HCT116 (cell line): ENCODE measurements at regions of chr6 and their contacts with region 1.

Region 1: GRCh38 chr6:158769771-158770432 is 49.3 kb downstream of the EZR start:
- DNase-seq: no peak
- ATAC-seq: no peak
- H3K4me3 ChIP-seq: no peak overlapping the region
- H3K27ac ChIP-seq: peak overlapping the region; percentile 57
- H3K4me1 ChIP-seq: peaks cover 13 to 100% of the 10 kb centered on the region in 2 experiments
- H3K27me3 ChIP-seq: no peaks in the 10 kb centered on the region
- CTCF ChIP-seq: no peak
- POLR2A ChIP-seq: no peak
- RAD21 ChIP-seq: no peak

Region 2: DNA sequence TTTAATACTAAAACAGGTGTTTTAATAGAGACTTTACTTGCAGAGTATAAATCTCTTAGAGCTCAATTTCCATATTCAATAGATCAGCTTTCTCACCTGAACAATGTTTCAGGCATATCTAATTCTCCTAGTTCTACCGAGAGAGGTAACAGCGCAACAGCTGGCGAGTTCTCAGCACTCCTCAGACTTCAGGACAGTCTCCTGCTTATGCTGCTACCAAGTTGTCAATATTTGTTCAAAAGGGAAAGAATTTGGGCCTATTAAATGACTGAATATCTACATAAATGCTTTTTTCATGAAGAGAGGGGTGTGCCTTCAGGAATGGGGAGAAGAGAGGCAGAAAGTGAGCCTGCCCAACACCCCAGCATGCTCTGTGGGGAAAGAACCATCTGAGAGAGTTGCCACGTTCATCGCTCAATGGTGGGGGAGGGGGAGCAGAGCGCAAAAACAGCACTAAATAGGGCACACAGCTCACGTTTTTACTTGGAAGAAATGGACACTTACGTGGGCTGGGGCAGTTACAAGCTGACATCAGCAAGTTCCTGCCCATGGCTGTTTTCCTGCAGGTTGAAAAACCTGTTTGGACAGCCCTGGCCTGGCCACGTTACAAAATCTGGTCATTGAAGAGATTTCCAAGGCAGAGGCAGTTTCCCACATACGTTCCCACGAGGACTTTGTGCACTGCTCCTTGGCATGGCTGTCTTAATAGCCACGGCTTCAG is 11.2 kb after region 1 on chr6:
- CTCF ChIA-PET with region 1: interaction called, 3 read pairs
- POLR2A ChIA-PET with region 1: interaction called, 13 read pairs
- RAD21 ChIA-PET with region 1: no interaction called
- intact Hi-C with region 1: no loop called
- DNase-seq: no peak
- ATAC-seq: 0 out of 2 replicates have a peak, but pooled peaks have one; percentile 0
- H3K4me3 ChIP-seq: no peak overlapping the region
- H3K27ac ChIP-seq: peak overlapping the region; percentile 34
- H3K4me1 ChIP-seq: peaks cover 60 to 98% of the 10 kb centered on the region in 2 experiments
- H3K27me3 ChIP-seq: no peaks in the 10 kb centered on the region
- CTCF ChIP-seq: no peak
- POLR2A ChIP-seq: no peak
- RAD21 ChIP-seq: no peak

Region 3: GRCh38 chr6:158835616-158836221 is 65.8 kb after region 1 on chr6:
- CTCF ChIA-PET with region 1: no interaction called
- POLR2A ChIA-PET with region 1: no interaction called
- RAD21 ChIA-PET with region 1: no interaction called
- intact Hi-C with region 1: no loop called
- DNase-seq: no peak
- ATAC-seq: 0 out of 2 replicates have a peak, but pooled peaks have one; percentile 23
- H3K4me3 ChIP-seq: no peak overlapping the region
- H3K27ac ChIP-seq: no peak overlapping the region
- H3K4me1 ChIP-seq: peaks cover 3 to 33% of the 10 kb centered on the region in 2 experiments; a peak in 2 of 4 replicates
- H3K27me3 ChIP-seq: no peaks in the 10 kb centered on the region
- CTCF ChIP-seq: no peak
- POLR2A ChIP-seq: no peak
- RAD21 ChIP-seq: no peak